A673 (cell line): ENCODE measurements at regions of chr7 and their contacts with region 1.

Region 1: GRCh38 chr7:24660546-24660945 is 87.3 kb downstream of the PALS2 start:
- DNase-seq: peak; percentile 24
- H3K4me3 ChIP-seq: no peak overlapping the region
- H3K27ac ChIP-seq: no peak overlapping the region
- H3K4me1 ChIP-seq: peaks cover 9% of the 10 kb centered on the region
- H3K27me3 ChIP-seq: no peaks in the 10 kb centered on the region
- CTCF ChIP-seq: no peak

Region 2: GRCh38 chr7:24587848-24588247 is 72.7 kb before region 1 on chr7:
- CTCF ChIA-PET with region 1: no interaction called
- POLR2A ChIA-PET with region 1: no interaction called
- intact Hi-C with region 1: loop called (anchors 5 kb)
- DNase-seq: peak; percentile 62
- H3K4me3 ChIP-seq: no peak overlapping the region
- H3K27ac ChIP-seq: no peak overlapping the region
- H3K4me1 ChIP-seq: peaks cover 10% of the 10 kb centered on the region
- H3K27me3 ChIP-seq: no peaks in the 10 kb centered on the region
- CTCF ChIP-seq: peak; percentile 64

Region 3: GRCh38 chr7:25093268-25093826 is 432.8 kb after region 1 on chr7:
- CTCF ChIA-PET with region 1: no interaction called
- POLR2A ChIA-PET with region 1: no interaction called
- intact Hi-C with region 1: no loop called
- DNase-seq: peak; percentile 84
- H3K4me3 ChIP-seq: no peak overlapping the region
- H3K27ac ChIP-seq: no peak overlapping the region
- H3K4me1 ChIP-seq: peaks cover 12% of the 10 kb centered on the region
- H3K27me3 ChIP-seq: no peaks in the 10 kb centered on the region
- CTCF ChIP-seq: peak; percentile 82